Right ventricle myocardium inferior (tissue), 1 donor: ENCODE measurements at regions of chr20 and their contacts with region 1.

Region 1: GRCh38 chr20:9068851-9069663 is at the start of gene PLCB4:
- DNase-seq: peak; percentile 76
- ATAC-seq: peak; percentile 31
- total RNA-seq, gene PLCB4: 27.7 TPM

Region 2: DNA sequence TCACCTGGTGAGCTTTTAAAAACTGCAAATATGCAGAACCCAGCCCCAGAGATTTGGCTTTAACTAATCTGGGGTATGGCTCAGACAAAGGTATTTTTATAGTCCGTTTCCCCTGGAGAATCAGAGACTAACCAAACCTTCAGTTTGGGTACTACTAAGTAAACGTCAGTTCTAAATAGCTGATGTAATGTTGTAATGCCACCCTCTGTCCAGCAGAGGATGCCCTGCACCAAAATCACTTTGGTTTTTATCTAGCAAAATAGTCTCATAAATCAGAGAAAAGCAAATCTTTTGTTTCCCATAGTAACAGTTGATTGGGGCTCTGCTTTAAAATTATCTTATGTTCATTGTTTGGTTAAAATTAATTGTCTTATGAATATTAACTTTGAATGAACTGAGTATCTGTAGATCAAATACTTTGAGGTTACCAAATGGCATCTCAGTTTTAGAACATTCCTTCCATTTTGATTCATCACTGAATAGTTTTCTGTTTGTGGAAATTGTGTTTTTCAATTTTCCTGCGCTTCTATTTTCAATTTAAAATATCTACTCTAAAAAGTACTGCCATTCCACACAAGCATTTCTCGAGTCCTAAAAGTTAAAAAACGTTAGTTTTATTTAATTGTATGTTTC is 278.5 kb before region 1 on chr20:
- intact Hi-C with region 1: loop called (anchors 5 kb)
- DNase-seq: no peak
- ATAC-seq: peak; percentile 23

Region 3: GRCh38 chr20:9112541-9113515 is 43.8 kb after region 1 on chr20:
- intact Hi-C with region 1: loop called (anchors 2 kb)
- DNase-seq: no peak
- ATAC-seq: peak; percentile 88

Region 4: GRCh38 chr20:9160757-9161156 is 91.7 kb after region 1 on chr20:
- intact Hi-C with region 1: loop called (anchors 5 kb)
- DNase-seq: no peak
- ATAC-seq: peak; percentile 62

Region 5: GRCh38 chr20:9269280-9269971 is 200.4 kb after region 1 on chr20:
- intact Hi-C with region 1: loop called (anchors 5 kb)
- DNase-seq: no peak
- ATAC-seq: peak; percentile 74

Region 6: DNA sequence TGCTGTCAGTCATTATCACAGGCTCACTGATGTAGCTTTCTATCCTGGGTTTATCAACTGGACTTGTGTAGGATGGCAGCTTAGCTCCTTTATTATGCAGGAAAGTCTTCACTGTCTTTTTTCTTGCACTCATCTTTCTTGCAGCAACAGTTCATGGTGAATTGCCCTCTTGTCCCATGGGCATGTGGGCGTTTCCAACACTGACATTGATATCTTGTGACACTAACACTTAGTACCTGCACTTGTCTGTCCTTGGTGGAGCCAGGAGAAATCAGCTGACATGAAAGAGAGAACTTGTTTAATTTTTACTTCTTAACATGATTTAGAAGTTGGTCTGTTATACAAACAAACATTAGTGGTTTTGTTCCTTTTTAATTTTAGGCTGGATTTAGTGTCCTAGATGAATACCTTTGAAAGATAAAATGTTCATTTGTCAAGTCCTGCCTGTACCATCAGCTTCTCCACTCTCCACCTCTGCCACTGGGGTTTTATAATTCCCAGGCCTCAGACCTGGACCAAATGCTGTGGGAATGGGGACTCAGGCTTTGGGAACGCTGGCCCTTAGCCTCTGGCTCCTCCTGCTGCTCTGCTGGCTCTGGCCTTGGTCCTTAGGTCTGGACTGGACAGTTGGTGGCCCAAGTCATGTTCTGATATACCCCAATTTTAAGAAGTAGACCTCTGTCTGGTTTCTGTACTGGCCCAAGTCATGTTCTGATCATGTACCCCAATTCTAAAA is 284.3 kb after region 1 on chr20:
- intact Hi-C with region 1: loop called (anchors 5 kb)
- DNase-seq: no peak
- ATAC-seq: peak; percentile 13